Aorta (tissue), 5 donors: ENCODE measurements at regions of chr7 and their contacts with region 1.

Region 1: DNA sequence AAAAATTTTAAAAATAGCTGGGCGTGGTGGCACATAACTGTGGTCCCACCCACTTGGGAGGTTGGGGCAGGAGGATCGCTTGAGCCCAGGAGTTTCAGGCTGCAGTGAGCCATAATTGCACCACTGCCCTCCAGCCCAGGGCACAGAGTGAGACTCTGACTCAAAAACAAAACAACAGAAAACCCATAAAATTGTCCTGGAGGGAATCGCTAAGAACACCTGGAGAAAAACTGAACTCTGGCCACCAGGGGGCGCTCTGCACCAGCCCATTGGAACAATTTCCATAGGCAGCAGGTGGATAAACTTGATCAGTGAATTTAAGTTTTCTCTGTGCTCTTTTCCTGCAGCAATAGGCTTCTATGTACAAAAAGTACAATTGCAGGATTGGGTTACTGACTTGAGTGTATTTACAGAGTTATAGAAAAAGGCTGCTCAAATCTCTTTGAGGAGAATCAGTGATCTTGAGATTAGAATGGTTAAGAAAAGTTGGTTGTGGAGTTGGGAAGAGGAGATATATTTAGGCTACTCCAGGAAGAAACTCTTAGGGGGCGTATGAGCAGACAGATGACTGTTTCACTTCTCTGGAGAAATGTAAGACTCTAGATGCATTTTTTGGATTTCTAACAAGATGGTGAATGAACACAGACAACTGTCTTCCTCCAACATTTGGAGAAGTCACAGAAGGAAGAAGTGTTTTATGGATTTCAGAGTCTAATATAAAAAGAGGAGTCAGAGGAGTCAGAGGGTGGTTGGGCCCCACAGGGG is 274.9 kb upstream of the GALNT17 start:
- DNase-seq: peak; percentile 57 to 91
- ATAC-seq: no peak
- H3K4me3 ChIP-seq: no peak overlapping the region
- H3K27ac ChIP-seq: no peak overlapping the region
- H3K4me1 ChIP-seq: no peaks in the 10 kb centered on the region
- H3K27me3 ChIP-seq: peaks cover 0 to 2% of the 10 kb centered on the region in 2 donors

Region 2: GRCh38 chr7:70506434-70506833 is 350.6 kb before region 1 on chr7:
- intact Hi-C with region 1: no loop called
- DNase-seq: no peak
- ATAC-seq: no peak
- H3K4me3 ChIP-seq: no peak overlapping the region
- H3K27ac ChIP-seq: no peak overlapping the region
- H3K4me1 ChIP-seq: no peaks in the 10 kb centered on the region
- H3K27me3 ChIP-seq: no peaks in the 10 kb centered on the region

Region 3: GRCh38 chr7:70920876-70921275 is 63.8 kb after region 1 on chr7:
- intact Hi-C with region 1: no loop called
- DNase-seq: no peak
- ATAC-seq: no peak
- H3K4me3 ChIP-seq: no peak overlapping the region
- H3K27ac ChIP-seq: no peak overlapping the region
- H3K4me1 ChIP-seq: no peaks in the 10 kb centered on the region
- H3K27me3 ChIP-seq: no peaks in the 10 kb centered on the region

Region 4: DNA sequence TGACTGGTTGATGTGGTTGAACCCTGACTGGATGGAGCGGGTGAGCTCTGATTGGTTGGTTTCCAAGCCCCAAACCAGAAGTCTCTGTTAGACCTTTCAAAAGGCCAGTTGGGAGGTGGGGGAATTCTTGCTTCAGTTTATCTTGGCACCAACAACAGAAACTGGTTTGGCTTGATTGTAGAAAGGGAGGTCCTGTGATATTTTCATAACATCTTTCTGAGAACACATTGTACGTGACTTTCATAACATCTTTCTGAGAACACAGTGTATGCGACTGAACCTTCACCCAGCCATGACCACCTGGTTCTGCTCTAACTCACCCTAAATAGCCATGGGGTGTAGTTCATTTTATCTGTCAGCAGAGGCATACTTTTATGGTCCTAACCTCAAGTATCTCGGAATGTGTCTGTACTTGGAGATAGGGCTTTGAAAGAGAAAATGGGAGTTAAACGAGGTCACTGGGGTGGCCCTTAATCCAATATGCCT is 363.2 kb after region 1 on chr7:
- intact Hi-C with region 1: loop called in 1 of 2 experiments (anchors 10 kb)
- DNase-seq: no peak
- ATAC-seq: peak; percentile 72
- H3K4me3 ChIP-seq: no peak overlapping the region
- H3K27ac ChIP-seq: no peak overlapping the region
- H3K4me1 ChIP-seq: peaks cover 0 to 4% of the 10 kb centered on the region in 2 donors
- H3K27me3 ChIP-seq: no peaks in the 10 kb centered on the region